HAP-1 (cell line): ENCODE measurements at regions of chr1 and their contacts with region 1.

Region 1: GRCh38 chr1:226827968-226828513 is 42.4 kb upstream of the PSEN2 start:
- DNase-seq: peak; percentile 92 to 98
- H3K4me3 ChIP-seq: no peak overlapping the region
- H3K4me1 ChIP-seq: peaks cover 5% of the 10 kb centered on the region
- H3K27me3 ChIP-seq: no peaks in the 10 kb centered on the region

Region 2: DNA sequence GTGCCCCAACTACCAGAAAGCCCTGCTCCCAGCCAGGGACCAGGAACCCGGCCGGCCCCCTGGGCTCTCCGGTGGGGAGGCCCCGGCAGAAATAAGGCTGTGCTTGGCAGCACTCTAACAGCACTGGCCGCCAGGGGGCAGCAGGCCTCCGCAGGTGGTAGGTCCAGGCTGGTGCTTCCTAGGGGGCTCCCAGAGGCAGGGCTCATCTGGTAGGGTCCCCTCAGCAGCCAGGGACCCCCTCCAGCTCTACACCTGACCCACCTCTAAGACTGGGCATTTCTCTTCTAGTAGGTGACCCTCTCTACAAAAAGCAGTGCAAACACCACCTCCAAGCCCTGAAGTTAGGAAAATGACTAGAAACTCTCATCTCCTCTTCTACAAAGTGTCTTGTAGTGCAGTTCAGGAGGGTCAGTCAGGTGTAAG is 193.9 kb before region 1 on chr1:
- in situ Hi-C with region 1: loop called (anchors 5 kb)
- DNase-seq: peak; percentile 51 to 87
- H3K4me3 ChIP-seq: no peak overlapping the region
- H3K4me1 ChIP-seq: no peaks in the 10 kb centered on the region
- H3K27me3 ChIP-seq: no peaks in the 10 kb centered on the region

Region 3: DNA sequence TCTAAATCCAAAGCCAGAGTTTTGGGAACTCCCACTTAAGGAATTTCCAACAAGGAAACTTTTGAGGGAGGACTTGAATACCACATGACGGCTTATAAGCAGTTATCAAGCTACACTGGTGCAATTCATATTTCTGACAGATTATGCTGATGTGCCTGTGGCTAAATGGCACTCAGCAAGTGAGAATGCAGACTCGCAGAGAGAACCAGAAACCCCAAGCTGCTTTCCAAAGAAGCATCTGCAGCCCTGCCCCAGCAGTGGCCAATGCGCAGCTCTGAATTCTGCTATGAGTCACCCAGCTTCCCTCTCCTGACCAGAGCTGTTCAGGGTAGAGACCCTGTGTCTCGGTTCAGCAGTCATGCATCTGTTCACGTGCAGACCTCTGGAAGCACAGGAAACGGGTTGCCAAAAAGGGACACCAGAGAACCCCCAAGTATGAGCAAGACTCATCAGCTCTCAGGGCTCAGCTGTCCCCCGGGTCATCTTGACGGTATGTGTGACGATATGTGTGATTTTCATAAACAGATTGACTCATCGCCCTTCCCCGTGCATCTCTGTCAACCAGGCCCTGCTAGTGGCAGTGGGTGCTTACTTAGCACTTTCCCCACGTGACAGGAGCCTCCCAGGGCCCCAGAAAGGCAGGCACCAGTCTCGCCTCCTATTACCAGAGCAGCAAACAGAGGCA is 165.3 kb before region 1 on chr1:
- in situ Hi-C with region 1: no loop called
- DNase-seq: no peak
- H3K4me3 ChIP-seq: no peak overlapping the region
- H3K4me1 ChIP-seq: peaks cover 3% of the 10 kb centered on the region
- H3K27me3 ChIP-seq: no peaks in the 10 kb centered on the region

Region 4: DNA sequence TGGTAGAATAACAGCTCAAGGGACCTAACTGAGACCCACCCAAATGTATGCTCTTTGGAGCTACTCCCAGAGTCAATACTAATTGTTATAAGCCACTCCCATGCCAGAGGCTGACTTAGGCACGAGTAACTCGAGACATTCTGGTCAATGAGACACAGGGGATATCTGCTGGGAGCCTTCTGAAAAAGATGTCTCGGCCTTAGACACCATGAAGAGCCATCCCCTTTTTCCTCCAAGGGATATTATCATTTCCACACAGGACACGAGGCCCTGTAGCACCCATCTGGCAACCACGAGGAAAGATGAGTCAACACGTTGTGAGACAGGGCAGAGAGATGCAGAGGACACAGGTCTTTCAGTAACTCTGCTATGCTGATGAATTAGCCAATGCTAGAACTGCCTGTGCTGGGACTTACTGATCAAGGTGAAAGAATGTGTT is 119.7 kb before region 1 on chr1:
- in situ Hi-C with region 1: loop called (anchors 5 kb)
- DNase-seq: no peak
- H3K4me3 ChIP-seq: no peak overlapping the region
- H3K4me1 ChIP-seq: peaks cover 13% of the 10 kb centered on the region
- H3K27me3 ChIP-seq: no peaks in the 10 kb centered on the region

Region 5: DNA sequence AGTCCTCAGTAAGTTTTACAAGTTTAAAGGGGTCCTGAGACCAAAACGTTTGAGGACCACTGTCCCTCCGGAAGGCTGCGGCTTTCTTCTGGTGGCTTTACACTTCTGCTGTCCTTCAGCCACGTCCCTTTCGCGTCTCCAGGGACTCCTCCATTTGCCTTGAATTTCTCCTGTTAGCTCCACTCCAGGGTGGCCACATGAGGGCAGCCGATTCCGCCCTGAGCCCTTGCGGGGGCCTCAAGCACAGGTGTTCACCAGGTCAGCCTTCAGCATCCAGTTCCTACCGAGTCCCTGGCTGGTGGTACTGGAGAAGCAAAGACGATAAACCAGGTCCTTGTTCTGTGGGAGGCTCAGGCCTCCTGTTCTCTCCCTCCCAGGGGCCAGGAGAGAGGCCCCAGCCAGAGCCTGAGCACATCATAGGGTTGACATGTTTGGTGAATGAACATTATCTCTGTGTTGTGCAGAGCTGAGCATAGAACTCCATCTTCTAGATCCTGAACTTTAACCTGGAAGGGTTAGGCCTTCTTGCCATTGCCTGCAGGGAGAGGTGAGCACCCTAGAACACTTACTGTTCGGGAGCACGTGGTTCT is 84.6 kb after region 1 on chr1:
- in situ Hi-C with region 1: no loop called
- DNase-seq: peak in 1 of 2 experiments; percentile 32
- H3K4me3 ChIP-seq: no peak overlapping the region
- H3K4me1 ChIP-seq: no peaks in the 10 kb centered on the region
- H3K27me3 ChIP-seq: no peaks in the 10 kb centered on the region

Region 6: GRCh38 chr1:226990133-226990716 is 162.2 kb after region 1 on chr1:
- in situ Hi-C with region 1: no loop called
- DNase-seq: no peak
- H3K4me3 ChIP-seq: no peak overlapping the region
- H3K4me1 ChIP-seq: no peaks in the 10 kb centered on the region; the same call in 1 of the 2 replicates
- H3K27me3 ChIP-seq: no peaks in the 10 kb centered on the region